Activated T-helper 1 cell treated with anti-CD3 and anti-CD28 coated beads, Interleukin-12 subunit alpha, Interleukin-12 subunit beta, Interleukin-2, Interleukin-4 antibody, amounts not matched to agents 30 ng/mL and 10 ng/mL and 1 ng/mL, durations not matched to agents 14 hours and 24 hours and 36 hours (primary cell): ENCODE measurements at regions of chr4 and their contacts with region 1.

Region 1: DNA sequence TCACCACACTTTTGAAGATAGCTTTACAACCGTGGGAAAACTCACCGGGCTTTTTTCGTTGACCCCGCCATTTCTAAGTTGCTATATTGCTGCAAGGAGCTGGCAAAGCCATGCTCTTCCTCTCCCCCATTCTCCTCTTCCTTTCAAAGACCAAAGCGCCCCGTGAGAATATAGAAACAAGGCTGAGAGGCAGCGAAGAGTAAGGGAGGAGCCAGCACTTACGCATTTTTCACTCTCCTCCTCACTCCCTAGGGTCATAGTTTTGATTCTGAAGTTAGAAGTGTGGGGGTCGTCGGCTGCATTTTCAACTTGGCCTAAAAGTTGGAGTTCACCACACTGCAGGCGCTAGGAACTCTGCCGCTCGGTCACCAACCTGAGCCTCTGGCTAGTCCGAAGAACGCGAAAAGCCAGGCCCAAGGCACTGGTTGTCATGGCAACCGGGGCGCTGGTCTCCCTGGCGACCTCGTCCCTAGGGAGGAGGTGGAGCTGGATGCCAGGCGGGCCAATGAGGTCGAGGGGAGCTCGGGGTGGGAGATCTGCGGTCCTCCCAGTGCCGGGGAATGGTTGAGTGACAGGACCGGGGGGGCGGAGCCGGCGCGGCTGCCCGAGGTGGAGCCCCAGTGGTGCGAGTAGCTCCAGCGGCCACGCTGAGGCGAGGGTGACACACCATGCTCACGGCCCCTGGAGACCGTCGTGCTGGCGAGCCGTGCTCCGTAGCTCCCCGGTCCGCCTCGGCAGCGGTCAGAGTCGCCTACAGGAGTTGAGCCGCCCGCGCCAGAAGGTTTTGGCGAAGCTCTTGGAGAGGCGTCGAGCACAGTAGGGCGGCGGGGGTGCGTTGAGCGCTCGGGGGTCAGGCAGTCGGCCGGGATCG is at the start of gene PTPN13:
- DNase-seq: peak; percentile 45
- H3K4me3 Mint-ChIP-seq: peak within 1 kb of the TSS; percentile 74
- H3K27ac Mint-ChIP-seq: peak within 1 kb of the TSS; percentile 69
- H3K4me1 Mint-ChIP-seq: peaks cover 8% of the 10 kb centered on the region
- H3K27me3 Mint-ChIP-seq: peaks cover 47% of the 10 kb centered on the region
- total RNA-seq, gene PTPN13: 0.44 and 0.66 TPM in 2 replicates

Region 2: DNA sequence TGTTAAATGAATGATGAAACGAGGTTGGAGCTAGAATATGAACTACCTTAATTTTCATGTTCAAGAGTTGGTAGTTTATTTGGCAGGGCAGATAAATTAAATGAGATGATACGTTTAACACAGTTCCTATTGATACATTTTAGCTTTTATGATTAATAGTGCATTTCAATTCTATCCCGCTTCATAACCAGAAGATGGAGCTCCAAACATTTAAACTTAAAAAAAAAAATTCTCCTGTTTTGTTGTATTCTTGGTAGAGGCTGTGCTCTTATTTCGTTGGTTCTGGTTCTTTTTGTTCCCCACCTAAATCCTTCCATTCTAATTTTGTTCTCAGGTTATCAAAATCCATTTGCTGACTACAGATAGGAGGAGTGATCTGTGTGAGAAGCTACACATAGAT is 71.6 kb before region 1 on chr4:
- intact Hi-C with region 1: loop called (anchors 2 kb)
- DNase-seq: no peak
- H3K4me3 Mint-ChIP-seq: no peak overlapping the region
- H3K27ac Mint-ChIP-seq: no peak overlapping the region
- H3K4me1 Mint-ChIP-seq: peaks cover 16% of the 10 kb centered on the region
- H3K27me3 Mint-ChIP-seq: peaks cover 24% of the 10 kb centered on the region

Region 3: DNA sequence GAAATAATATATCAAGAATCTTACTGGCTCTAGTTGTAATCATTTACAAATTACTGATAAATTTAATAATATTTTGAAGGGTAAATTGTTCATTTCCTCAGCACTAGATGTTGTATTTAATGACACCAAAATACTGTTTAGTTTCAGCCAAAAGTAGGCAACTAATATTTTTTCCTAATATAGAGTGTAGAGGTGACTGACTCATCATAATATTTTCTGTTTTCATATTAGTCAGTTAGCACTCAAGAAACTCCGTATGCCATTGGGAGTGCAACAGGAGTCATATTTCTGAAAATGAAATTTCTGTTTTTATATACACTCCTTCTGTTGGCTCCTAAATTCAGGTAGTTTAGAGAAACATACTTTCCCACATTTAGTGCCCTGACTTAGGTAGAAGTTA is 36.4 kb before region 1 on chr4:
- intact Hi-C with region 1: loop called (anchors 5 kb)
- DNase-seq: no peak
- H3K4me3 Mint-ChIP-seq: no peak overlapping the region
- H3K27ac Mint-ChIP-seq: no peak overlapping the region
- H3K4me1 Mint-ChIP-seq: peaks cover 15% of the 10 kb centered on the region
- H3K27me3 Mint-ChIP-seq: peaks cover 12% of the 10 kb centered on the region

Region 4: GRCh38 chr4:87053802-87054767 is 460.2 kb after region 1 on chr4:
- intact Hi-C with region 1: no loop called
- DNase-seq: no peak
- H3K4me3 Mint-ChIP-seq: no peak overlapping the region
- H3K27ac Mint-ChIP-seq: peak overlapping the region; percentile 82
- H3K4me1 Mint-ChIP-seq: peaks cover 86% of the 10 kb centered on the region
- H3K27me3 Mint-ChIP-seq: no peaks in the 10 kb centered on the region